ENCODE measurements at regions of chr9 and their contacts with region 1.

Region 1: DNA sequence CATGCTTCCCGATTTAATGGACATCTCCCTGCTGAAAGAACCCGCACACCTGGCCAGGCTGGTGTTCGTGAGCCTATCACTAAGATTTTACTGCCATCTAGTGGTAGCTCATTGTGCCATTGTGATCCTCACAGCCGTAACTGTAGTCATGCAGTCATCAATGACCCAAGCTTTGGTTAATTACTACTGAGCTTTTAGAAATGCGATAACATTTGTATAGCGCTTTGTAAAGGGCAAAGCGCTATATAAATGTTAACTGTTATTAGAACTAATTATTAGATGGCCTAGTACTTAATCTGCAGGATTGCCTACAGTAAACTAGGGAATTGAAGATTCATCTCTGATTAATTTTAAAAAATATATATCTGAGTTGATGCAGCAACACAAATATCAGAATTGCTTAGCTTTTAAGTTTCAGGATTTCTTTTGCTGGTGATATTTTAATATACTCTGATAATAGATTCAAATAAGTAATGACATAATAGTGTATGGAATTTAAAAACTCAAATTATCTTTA is 90.2 kb downstream of the HACD4 start:
- DNase-seq: peak; percentile 13 to 51
- ATAC-seq: peak; percentile 84 to 93 (median 91)
- H3K4me3 ChIP-seq: no peak overlapping the region
- H3K27ac ChIP-seq: no peak overlapping the region
- H3K4me1 ChIP-seq: peaks cover 0 to 8% (median 0%) of the 10 kb centered on the region in 9 donors
- H3K27me3 ChIP-seq: no peaks in the 10 kb centered on the region
- CTCF ChIP-seq: peak; percentile 53 to 94 (median 89)

Region 2: GRCh38 chr9:19481971-19482404 is 1459.2 kb before region 1 on chr9:
- intact Hi-C with region 1: loop called in 1 of 10 experiments (anchors 10 kb)
- DNase-seq: no peak
- ATAC-seq: peak in 4 of 8 donors; percentile 29 to 52 (median 38)
- H3K4me3 ChIP-seq: no peak overlapping the region
- H3K27ac ChIP-seq: peak overlapping the region in 4 of 10 donors; percentile 10 to 64 (median 31)
- H3K4me1 ChIP-seq: peaks cover 0 to 12% (median 0%) of the 10 kb centered on the region in 9 donors
- H3K27me3 ChIP-seq: no peaks in the 10 kb centered on the region
- CTCF ChIP-seq: no peak

Region 3: GRCh38 chr9:20356403-20357035 is 584.7 kb before region 1 on chr9:
- intact Hi-C with region 1: loop called (anchors 1 to 10 kb)
- DNase-seq: peak; percentile 46 to 79
- ATAC-seq: peak; percentile 77 to 95 (median 91)
- H3K4me3 ChIP-seq: peak overlapping the region in 7 of 10 donors; percentile 0 to 42 (median 33)
- H3K27ac ChIP-seq: peak overlapping the region in 9 of 10 donors; percentile 1 to 76 (median 55)
- H3K4me1 ChIP-seq: peaks cover 0 to 38% (median 17%) of the 10 kb centered on the region in 9 donors
- H3K27me3 ChIP-seq: no peaks in the 10 kb centered on the region
- CTCF ChIP-seq: peak; percentile 55 to 87 (median 69)

Region 4: DNA sequence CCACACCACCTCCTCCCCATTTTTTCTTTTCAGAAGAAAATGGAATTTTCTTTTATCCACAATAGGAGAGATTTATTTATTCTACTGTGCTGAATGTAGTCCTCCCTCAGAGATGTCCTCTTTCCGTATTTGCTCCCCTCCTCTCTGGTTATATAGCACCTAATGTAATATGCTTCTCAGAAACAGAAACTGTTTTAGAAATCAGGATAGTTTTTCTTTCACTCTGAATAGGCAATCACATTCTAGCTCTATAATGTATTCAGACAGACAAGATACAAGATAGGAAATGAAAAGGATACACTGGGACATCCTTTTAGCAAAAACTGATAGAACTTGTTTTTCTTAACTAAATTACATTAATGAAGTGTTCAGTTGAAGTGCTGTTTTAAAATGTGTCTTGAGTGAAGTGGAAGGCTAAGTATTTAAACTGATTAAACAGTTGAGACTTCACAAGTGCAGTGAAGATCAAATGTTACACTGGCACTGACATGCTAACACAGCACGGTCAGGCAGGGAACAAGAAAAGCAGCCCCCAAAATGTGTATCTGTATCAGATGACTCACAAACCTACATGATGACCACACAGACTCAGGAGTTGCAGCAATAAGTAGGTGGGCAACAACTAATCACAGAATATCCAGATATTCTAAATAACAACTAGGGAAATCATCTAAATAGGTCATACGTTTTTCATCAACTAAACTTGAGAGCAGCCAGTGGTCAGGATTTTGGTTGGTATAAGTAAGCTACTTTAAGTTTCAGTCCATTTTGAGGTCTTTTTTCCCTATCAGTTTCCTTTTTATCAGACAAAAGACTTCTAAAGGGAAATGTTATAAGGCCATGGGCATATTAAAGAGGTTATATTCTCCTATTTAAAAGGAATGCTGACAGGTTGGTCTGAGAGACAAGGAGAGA is 579.3 kb before region 1 on chr9:
- intact Hi-C with region 1: loop called in 9 of 10 experiments (anchors 2 to 10 kb)
- DNase-seq: no peak
- ATAC-seq: no peak
- H3K4me3 ChIP-seq: no peak overlapping the region
- H3K27ac ChIP-seq: no peak overlapping the region
- H3K4me1 ChIP-seq: peaks cover 0 to 7% (median 4%) of the 10 kb centered on the region in 9 donors
- H3K27me3 ChIP-seq: no peaks in the 10 kb centered on the region
- CTCF ChIP-seq: no peak